Adrenal gland (tissue), 19 donors: ENCODE measurements at regions of chr6 and their contacts with region 1.

Region 1: GRCh38 chr6:33771146-33772081 is 17.5 kb downstream of the LEMD2 start:
- DNase-seq: peak; percentile 61 to 83 (median 74)
- H3K4me3 ChIP-seq: no peak overlapping the region
- H3K27ac ChIP-seq: peak overlapping the region in 3 of 5 donors; percentile 10 to 86 (median 68)
- H3K4me1 ChIP-seq: peaks cover 13 to 24% of the 10 kb centered on the region in 2 donors
- H3K27me3 ChIP-seq: no peaks in the 10 kb centered on the region
- CTCF ChIP-seq: peak; percentile 71 to 98 (median 90)
- POLR2A ChIP-seq: no peak

Region 2: GRCh38 chr6:34027445-34027936 is 256.1 kb after region 1 on chr6:
- intact Hi-C with region 1: loop called (anchors 5 kb)
- DNase-seq: peak in 5 of 7 donors; percentile 30 to 48 (median 41)
- H3K4me3 ChIP-seq: no peak overlapping the region
- H3K27ac ChIP-seq: no peak overlapping the region
- H3K4me1 ChIP-seq: no peaks in the 10 kb centered on the region
- H3K27me3 ChIP-seq: no peaks in the 10 kb centered on the region
- CTCF ChIP-seq: peak; percentile 49 to 80 (median 70)
- POLR2A ChIP-seq: no peak

Region 3: DNA sequence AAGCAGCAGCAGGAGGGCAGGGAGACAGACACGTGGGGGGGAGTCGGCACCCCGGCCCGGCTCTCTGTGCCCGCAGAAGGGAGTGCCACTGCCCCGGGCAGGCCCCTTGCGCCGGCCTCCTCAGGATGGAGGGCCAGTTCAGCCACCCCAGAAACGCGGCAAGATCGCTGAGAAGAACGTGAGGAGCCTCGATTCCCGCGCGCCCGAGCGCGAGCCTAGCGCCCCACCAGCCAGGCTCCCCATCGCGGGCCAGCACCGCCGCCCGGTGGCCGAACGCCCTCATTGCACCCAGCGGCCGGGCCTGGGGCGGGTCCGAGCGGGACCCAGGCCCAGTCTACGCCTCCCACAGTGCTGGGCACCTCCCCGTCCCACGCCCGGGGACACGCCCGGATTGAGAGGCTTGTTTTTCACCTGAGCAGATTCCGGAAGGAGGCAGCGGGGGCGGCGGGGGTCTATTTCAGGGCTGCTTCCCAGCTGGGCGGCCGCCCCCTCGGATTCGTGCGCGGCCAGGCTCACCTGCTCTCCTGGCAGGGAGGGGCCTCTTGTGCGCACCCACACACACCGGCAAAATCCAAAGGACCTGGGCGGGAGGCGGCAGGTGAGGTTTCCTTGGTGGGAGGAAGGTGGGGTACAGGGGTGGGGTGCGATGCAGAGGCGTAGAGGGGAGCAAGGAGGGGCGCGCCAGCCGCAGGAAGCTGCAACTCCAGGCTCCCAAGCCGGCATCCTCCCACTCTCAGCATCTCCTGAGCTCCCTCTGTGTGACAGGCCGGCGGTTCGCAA is 383.4 kb after region 1 on chr6:
- intact Hi-C with region 1: loop called (anchors 5 kb)
- DNase-seq: peak in 6 of 7 donors; percentile 35 to 58 (median 48)
- H3K4me3 ChIP-seq: peak overlapping the region in 1 of 4 donors; percentile 4
- H3K27ac ChIP-seq: no peak overlapping the region
- H3K4me1 ChIP-seq: peaks cover 0 to 5% of the 10 kb centered on the region in 2 donors
- H3K27me3 ChIP-seq: peaks cover 33% of the 10 kb centered on the region
- CTCF ChIP-seq: peak; percentile 80 to 98 (median 90)
- POLR2A ChIP-seq: no peak